ENCODE measurements at regions of chr6 and their contacts with region 1.

Region 1: GRCh38 chr6:160992061-160992979 is 751 bp downstream of the MAP3K4 start:
- DNase-seq: peak; percentile 65
- H3K4me3 ChIP-seq: peak overlapping the region; percentile 89 to 93 (median 93)
- H3K27ac ChIP-seq: peak overlapping the region; percentile 78
- H3K4me1 ChIP-seq: peaks cover 20% of the 10 kb centered on the region
- H3K27me3 ChIP-seq: no peaks in the 10 kb centered on the region
- CTCF ChIP-seq: peak; percentile 63 to 80

Region 2: DNA sequence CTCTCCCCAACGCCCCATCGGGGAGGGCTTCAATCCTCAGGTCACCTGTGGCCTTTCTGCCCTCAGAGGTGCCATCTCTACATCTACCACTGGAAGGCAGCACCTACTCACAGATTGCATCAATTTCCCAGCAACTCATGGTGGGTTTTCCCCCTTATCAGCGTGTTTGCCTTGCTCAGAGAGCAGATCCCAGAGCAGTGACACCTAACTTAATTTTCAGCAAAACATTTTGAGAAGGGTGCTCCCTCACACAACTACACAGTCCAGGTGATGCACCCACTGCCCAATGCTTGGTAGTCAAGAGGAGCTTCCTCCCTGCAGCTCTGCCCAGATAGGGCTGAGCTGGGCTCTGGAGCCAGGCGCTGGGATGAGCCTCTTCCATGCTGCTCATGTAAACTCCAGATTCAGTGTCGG is 242.0 kb before region 1 on chr6:
- CTCF ChIA-PET with region 1: no interaction called
- dilution Hi-C with region 1: no loop called
- in situ Hi-C with region 1: no loop called
- intact Hi-C with region 1: loop called (anchors 5 kb)
- DNase-seq: peak; percentile 25
- H3K4me3 ChIP-seq: no peak overlapping the region
- H3K27ac ChIP-seq: no peak overlapping the region
- H3K4me1 ChIP-seq: no peaks in the 10 kb centered on the region
- H3K27me3 ChIP-seq: no peaks in the 10 kb centered on the region
- CTCF ChIP-seq: peak; percentile 85 to 86

Region 3: GRCh38 chr6:160950507-160950906 is 41.8 kb before region 1 on chr6:
- CTCF ChIA-PET with region 1: interaction called, 3 read pairs
- dilution Hi-C with region 1: no loop called
- in situ Hi-C with region 1: no loop called
- intact Hi-C with region 1: loop called (anchors 1 kb)
- DNase-seq: peak; percentile 70
- H3K4me3 ChIP-seq: no peak overlapping the region
- H3K27ac ChIP-seq: peak overlapping the region; percentile 72
- H3K4me1 ChIP-seq: peaks cover 16% of the 10 kb centered on the region
- H3K27me3 ChIP-seq: no peaks in the 10 kb centered on the region
- CTCF ChIP-seq: no peak

Region 4: GRCh38 chr6:160972111-160972510 is 20.2 kb before region 1 on chr6:
- CTCF ChIA-PET with region 1: no interaction called
- dilution Hi-C with region 1: no loop called
- in situ Hi-C with region 1: no loop called
- intact Hi-C with region 1: loop called (anchors 1 kb)
- DNase-seq: peak; percentile 93
- H3K4me3 ChIP-seq: no peak overlapping the region
- H3K27ac ChIP-seq: peak overlapping the region; percentile 59
- H3K4me1 ChIP-seq: peaks cover 35% of the 10 kb centered on the region
- H3K27me3 ChIP-seq: no peaks in the 10 kb centered on the region
- CTCF ChIP-seq: no peak

Region 5: DNA sequence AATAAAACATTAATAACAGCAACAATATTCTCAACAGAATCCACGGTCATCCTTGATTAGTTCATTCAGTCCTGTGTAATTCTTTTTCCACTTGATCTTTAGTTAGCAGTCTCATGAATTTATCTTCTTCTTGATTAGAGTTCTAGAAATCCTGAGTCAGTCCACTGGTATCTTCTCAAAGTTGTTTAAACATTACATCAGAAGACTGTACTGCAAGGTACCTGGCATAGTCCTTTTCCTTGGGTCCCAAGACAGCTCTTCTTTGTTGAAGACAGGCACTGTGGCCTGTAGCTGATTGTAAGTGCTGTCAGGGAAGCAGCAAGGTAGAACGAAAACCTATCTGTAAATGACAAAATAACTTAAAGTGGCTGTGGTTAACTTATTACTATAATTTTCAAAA is 11.0 kb after region 1 on chr6:
- CTCF ChIA-PET with region 1: no interaction called
- dilution Hi-C with region 1: no loop called
- in situ Hi-C with region 1: no loop called
- intact Hi-C with region 1: no loop called
- DNase-seq: no peak
- H3K4me3 ChIP-seq: no peak overlapping the region
- H3K27ac ChIP-seq: no peak overlapping the region
- H3K4me1 ChIP-seq: peaks cover 9% of the 10 kb centered on the region
- H3K27me3 ChIP-seq: no peaks in the 10 kb centered on the region
- CTCF ChIP-seq: no peak

Region 6: DNA sequence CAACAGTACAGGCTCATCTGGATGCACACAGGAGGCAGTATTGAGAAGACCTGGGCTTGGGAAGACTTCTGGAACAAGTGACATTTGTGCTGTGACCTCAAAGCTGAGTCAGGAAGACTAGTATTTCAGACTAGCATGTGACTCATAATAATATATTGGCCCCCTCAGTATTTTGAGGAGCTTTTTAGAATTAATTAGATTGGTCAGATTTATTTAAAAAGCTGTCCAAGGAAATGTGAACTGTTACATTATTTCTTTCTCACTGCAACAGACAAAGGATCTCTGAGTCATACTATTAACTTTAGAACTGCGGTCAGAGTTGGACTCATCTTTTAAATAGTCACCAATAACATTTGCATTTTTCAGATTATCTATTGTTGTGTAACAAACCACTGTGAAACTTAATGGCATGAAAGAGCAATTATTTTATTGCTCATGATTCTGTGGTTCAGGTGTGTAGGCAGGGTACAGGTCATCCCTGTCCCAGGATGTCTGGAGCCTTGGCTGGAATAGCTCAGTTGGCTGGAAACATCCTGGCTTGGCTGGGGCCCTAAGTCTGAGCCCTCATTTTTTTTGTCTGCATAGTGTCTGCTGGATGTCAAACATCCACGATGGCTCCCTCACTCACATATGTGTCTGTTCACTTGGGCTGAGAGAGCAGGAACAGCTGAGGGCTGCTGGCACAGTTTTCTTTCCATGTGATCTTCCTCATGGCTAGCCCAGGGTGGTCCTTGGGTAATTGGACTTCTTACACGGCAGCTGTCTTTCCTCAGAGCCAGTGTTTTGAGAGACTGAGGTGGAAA is 46.1 kb after region 1 on chr6:
- CTCF ChIA-PET with region 1: no interaction called
- dilution Hi-C with region 1: no loop called
- in situ Hi-C with region 1: no loop called
- intact Hi-C with region 1: loop called (anchors 2 kb)
- DNase-seq: peak; percentile 96
- H3K4me3 ChIP-seq: no peak overlapping the region
- H3K27ac ChIP-seq: peak overlapping the region; percentile 93
- H3K4me1 ChIP-seq: peaks cover 32% of the 10 kb centered on the region
- H3K27me3 ChIP-seq: no peaks in the 10 kb centered on the region
- CTCF ChIP-seq: peak; percentile 36 to 51

Region 7: GRCh38 chr6:161076181-161076677 is 83.9 kb after region 1 on chr6:
- CTCF ChIA-PET with region 1: no interaction called
- dilution Hi-C with region 1: no loop called
- in situ Hi-C with region 1: no loop called
- intact Hi-C with region 1: no loop called
- DNase-seq: no peak
- H3K4me3 ChIP-seq: no peak overlapping the region
- H3K27ac ChIP-seq: no peak overlapping the region
- H3K4me1 ChIP-seq: peaks cover 6% of the 10 kb centered on the region
- H3K27me3 ChIP-seq: no peaks in the 10 kb centered on the region
- CTCF ChIP-seq: no peak

Region 8: DNA sequence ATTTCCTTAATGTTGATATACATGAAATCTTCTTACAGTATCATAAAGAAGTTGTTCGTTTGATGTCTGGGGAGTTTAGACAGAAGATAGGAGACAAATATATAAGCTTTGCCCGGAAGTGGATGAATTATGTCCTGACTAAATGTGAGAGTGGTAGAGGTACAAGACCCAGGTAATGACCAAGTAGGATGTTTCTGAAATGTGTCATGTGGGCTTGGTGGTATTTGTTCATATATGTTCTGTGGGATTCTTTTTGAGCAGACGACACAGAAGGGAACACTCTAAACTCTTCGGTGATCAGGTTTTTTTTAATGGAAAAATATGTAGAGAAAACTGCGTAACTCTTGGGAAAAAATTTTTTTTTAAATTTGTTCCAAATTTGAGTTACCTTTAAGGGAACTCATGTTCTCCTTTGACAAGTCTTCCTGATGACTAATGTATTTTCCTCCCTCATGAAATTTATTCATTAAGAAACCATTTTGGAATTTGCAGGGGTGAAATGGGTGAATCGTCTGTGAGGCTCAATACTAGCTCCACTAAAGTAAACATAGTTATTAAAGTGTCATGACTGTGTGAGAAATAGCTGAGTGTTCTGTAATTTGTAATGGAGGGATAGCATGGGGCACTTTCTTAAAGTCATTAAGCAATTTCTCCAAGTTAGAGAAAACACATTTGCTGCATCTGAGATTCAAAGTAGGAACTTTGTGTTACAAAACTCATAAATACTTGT is 99.8 kb after region 1 on chr6:
- CTCF ChIA-PET with region 1: no interaction called
- dilution Hi-C with region 1: no loop called
- in situ Hi-C with region 1: no loop called
- intact Hi-C with region 1: loop called (anchors 5 kb)
- DNase-seq: peak; percentile 67
- H3K4me3 ChIP-seq: no peak overlapping the region
- H3K27ac ChIP-seq: peak overlapping the region; percentile 61
- H3K4me1 ChIP-seq: peaks cover 15% of the 10 kb centered on the region
- H3K27me3 ChIP-seq: no peaks in the 10 kb centered on the region
- CTCF ChIP-seq: no peak

Region 9: GRCh38 chr6:161273752-161274487 is 281.6 kb after region 1 on chr6 and contains the start of gene AGPAT4:
- CTCF ChIA-PET with region 1: no interaction called
- dilution Hi-C with region 1: no loop called
- in situ Hi-C with region 1: no loop called
- intact Hi-C with region 1: loop called (anchors 5 kb)
- DNase-seq: peak; percentile 95
- H3K4me3 ChIP-seq: peak within 1 kb of the TSS; percentile 67 to 85 (median 69)
- H3K27ac ChIP-seq: peak within 1 kb of the TSS; percentile 95
- H3K4me1 ChIP-seq: peaks cover 12% of the 10 kb centered on the region
- H3K27me3 ChIP-seq: no peaks in the 10 kb centered on the region
- CTCF ChIP-seq: no peak
- total RNA-seq, gene AGPAT4: 12.5 to 15.8 TPM

Measured in mammary epithelial cell (primary cell).